ENCODE measurements at regions of chr2 and their contacts with region 1.

Region 1: GRCh38 chr2:178112202-178113152 is at the start of gene RBM45:
- ATAC-seq: peak; percentile 93 to 99 (median 98)
- H3K4me3 ChIP-seq: peak within 1 kb of the TSS; percentile 53 to 83 (median 64)
- H3K27ac ChIP-seq: peak within 1 kb of the TSS; percentile 46 to 80
- H3K4me1 ChIP-seq: peaks cover 6 to 11% of the 10 kb centered on the region in 2 donors
- total RNA-seq, gene RBM45: 9.4 to 30.2 (median 15.5) TPM

Region 2: GRCh38 chr2:178414266-178415247 is 302.1 kb after region 1 on chr2:
- in situ Hi-C with region 1: loop called in 2 of 9 experiments (anchors 10 to 25 kb)
- ATAC-seq: peak; percentile 74 to 93 (median 90)
- H3K4me3 ChIP-seq: peak overlapping the region; percentile 47 to 80 (median 52)
- H3K27ac ChIP-seq: peak overlapping the region; percentile 94 to 95
- H3K4me1 ChIP-seq: peaks cover 0 to 9% of the 10 kb centered on the region in 2 donors

Region 3: GRCh38 chr2:178473931-178474330 is 361.5 kb after region 1 on chr2:
- in situ Hi-C with region 1: no loop called
- ATAC-seq: no peak
- H3K4me3 ChIP-seq: no peak overlapping the region
- H3K27ac ChIP-seq: no peak overlapping the region
- H3K4me1 ChIP-seq: peaks cover 0 to 5% of the 10 kb centered on the region in 2 donors

Measured in motor neuron (in vitro differentiated cells).